ENCODE measurements at regions of chr12 and their contacts with region 1.

Region 1: DNA sequence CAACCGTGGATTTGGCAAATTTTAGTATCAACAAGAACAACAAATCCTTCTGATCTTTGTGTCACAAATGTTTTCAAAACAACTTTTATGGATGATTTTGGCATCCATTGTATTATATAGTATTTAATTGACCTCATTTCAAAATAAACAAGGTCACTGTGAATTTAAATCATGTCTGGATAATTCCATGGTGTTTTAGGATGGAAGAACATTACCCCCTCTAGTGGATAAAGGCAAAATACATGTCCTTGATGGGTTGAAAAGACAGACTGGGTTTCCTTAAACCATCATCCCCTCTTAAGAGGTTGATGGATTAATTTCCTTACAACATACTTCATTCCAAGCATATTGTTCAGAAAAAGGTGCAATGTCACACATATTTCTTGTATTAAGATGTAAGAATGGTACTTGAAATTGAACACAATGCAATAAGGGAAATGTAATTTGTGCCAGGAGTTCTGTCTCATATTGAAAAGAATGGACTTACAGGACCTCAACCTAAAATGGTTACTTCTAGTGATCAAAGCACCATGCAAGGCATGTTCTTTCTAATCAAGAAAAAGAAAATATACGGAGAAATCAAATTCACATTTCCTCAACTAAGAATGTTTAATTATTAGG is 352.0 kb downstream of the BCAT1 start:
- ATAC-seq: peak in 3 of 8 experiments; percentile 34 to 50 (median 41)
- H3K4me3 ChIP-seq: no peak overlapping the region
- H3K27ac ChIP-seq: no peak overlapping the region
- H3K4me1 ChIP-seq: peaks cover 0 to 2% of the 10 kb centered on the region in 2 donors

Region 2: DNA sequence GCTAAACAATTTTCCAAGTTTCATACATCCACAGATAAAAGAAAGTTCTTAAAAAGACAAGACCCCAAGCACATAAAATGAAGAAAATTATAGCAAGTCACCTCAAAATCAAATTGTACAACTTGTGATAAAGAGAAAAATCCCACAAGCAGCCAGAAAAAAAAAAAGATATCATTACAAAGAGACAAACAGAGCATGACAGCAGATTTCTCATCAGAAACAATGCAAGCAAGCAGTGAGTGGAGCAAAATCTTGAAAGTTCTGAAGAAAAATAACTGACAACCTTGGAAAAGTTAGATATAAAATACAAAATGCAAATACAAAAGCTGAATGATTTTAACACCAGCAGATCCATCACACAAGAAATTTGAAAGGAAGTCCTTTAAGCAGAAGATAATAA is 452.9 kb before region 1 on chr12:
- in situ Hi-C with region 1: no loop called
- ATAC-seq: no peak
- H3K4me3 ChIP-seq: no peak overlapping the region
- H3K27ac ChIP-seq: no peak overlapping the region
- H3K4me1 ChIP-seq: peaks cover 4 to 6% of the 10 kb centered on the region in 2 donors

Region 3: DNA sequence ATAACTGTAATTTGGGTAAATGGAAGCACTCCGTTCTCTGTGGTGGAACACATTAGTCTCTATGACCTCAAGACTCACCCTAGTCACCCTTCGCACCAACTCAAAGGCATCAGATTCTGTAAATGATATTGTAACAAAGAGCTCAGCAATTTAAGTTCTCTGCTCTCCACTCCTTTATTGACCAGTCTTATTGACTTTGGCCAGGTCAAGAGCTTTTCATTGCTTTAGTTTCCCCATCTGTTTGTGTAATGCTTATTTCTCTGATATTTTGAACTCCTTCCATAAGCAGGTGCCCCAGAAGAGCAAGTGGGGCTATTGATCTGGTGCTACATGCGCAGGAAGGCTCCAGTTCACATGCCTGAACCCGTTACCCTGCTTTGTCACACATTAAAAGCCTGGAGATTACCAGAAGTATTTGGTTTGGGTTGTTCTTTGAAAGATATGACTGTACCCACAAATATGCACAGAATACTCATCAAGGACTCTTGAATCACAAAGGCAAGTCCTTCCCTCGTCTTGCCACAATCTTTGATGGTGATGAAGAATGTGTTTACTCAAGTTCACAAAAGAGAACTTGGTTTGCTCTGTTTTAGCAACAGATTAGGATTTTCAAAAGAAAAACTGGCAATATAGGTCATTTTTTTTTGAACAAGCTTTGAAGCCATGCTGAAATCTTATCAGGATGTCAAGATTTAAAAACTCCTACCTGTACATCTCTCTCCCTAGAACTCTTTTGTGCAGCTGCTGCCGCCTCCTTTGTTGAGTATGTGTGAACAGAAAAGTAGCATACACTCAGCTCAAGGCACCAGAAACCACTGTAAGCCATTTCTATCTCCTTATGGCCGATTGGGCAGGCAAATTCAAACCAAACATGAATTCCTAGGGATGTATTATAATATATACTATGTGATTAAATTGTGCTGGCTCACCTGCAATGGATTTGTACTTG is 158.1 kb after region 1 on chr12:
- in situ Hi-C with region 1: loop called in 1 of 9 experiments (anchors 25 kb)
- ATAC-seq: peak in 2 of 8 experiments; percentile 43 to 57
- H3K4me3 ChIP-seq: no peak overlapping the region
- H3K27ac ChIP-seq: no peak overlapping the region
- H3K4me1 ChIP-seq: no peaks in the 10 kb centered on the region

Measured in motor neuron (in vitro differentiated cells).